PC-3 (cell line): ENCODE measurements at regions of chr5 and their contacts with region 1.

Region 1: GRCh38 chr5:17951392-17952115 is 317.3 kb downstream of the TAF11L14 start:
- DNase-seq: peak; percentile 98
- ATAC-seq: peak; percentile 94
- H3K4me3 ChIP-seq: peak overlapping the region; percentile 61
- H3K27ac ChIP-seq: peak overlapping the region; percentile 99
- H3K4me1 ChIP-seq: peaks cover 22% of the 10 kb centered on the region
- H3K27me3 ChIP-seq: no peaks in the 10 kb centered on the region
- CTCF ChIP-seq: peak; percentile 91

Region 2: GRCh38 chr5:17398439-17398838 is 553.1 kb before region 1 on chr5:
- CTCF ChIA-PET with region 1: no interaction called
- POLR2A ChIA-PET with region 1: interaction called, 10 read pairs
- intact Hi-C with region 1: no loop called
- DNase-seq: peak; percentile 93
- ATAC-seq: peak; percentile 74
- H3K4me3 ChIP-seq: no peak overlapping the region
- H3K27ac ChIP-seq: no peak overlapping the region
- H3K4me1 ChIP-seq: peaks cover 26% of the 10 kb centered on the region
- H3K27me3 ChIP-seq: no peaks in the 10 kb centered on the region
- CTCF ChIP-seq: no peak

Region 3: DNA sequence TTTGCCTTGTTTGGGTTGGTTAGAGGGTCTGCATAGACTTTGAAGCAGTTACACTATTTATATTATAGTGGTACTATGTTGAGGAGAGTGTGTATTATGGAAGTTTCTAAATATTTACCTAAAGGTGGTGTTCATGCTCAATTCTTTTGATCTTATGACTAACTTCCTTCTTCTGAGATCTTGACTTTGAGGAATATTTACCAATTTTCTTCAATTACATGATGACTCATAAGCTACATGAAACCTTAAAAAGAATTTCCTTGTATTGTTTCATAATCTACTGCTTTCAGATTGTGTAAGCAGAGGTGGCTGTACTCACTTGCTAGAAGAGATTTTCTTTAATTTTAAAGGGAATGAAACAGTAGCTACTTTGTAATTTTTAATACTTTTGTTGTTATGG is 41.2 kb before region 1 on chr5:
- CTCF ChIA-PET with region 1: no interaction called
- POLR2A ChIA-PET with region 1: no interaction called
- intact Hi-C with region 1: loop called (anchors 2 kb)
- DNase-seq: peak; percentile 91
- ATAC-seq: peak; percentile 98
- H3K4me3 ChIP-seq: no peak overlapping the region
- H3K27ac ChIP-seq: no peak overlapping the region
- H3K4me1 ChIP-seq: peaks cover 13% of the 10 kb centered on the region
- H3K27me3 ChIP-seq: no peaks in the 10 kb centered on the region
- CTCF ChIP-seq: no peak

Region 4: GRCh38 chr5:18008940-18009339 is 57.4 kb after region 1 on chr5:
- CTCF ChIA-PET with region 1: interaction called, 3 read pairs
- POLR2A ChIA-PET with region 1: no interaction called
- intact Hi-C with region 1: loop called (anchors 5 kb)
- DNase-seq: peak; percentile 50
- ATAC-seq: peak; percentile 95
- H3K4me3 ChIP-seq: no peak overlapping the region
- H3K27ac ChIP-seq: 0 out of 2 replicates have a peak overlapping the region, but pooled peaks have one; percentile 12
- H3K4me1 ChIP-seq: peaks cover 15% of the 10 kb centered on the region
- H3K27me3 ChIP-seq: no peaks in the 10 kb centered on the region
- CTCF ChIP-seq: no peak

Region 5: GRCh38 chr5:18048442-18048841 is 96.9 kb after region 1 on chr5:
- CTCF ChIA-PET with region 1: no interaction called
- POLR2A ChIA-PET with region 1: no interaction called
- intact Hi-C with region 1: loop called (anchors 5 kb)
- DNase-seq: peak; percentile 65
- ATAC-seq: peak; percentile 99
- H3K4me3 ChIP-seq: no peak overlapping the region
- H3K27ac ChIP-seq: no peak overlapping the region
- H3K4me1 ChIP-seq: peaks cover 13% of the 10 kb centered on the region
- H3K27me3 ChIP-seq: no peaks in the 10 kb centered on the region
- CTCF ChIP-seq: no peak

Region 6: GRCh38 chr5:18113721-18114120 is 162.2 kb after region 1 on chr5:
- CTCF ChIA-PET with region 1: no interaction called
- POLR2A ChIA-PET with region 1: no interaction called
- intact Hi-C with region 1: loop called (anchors 1 kb)
- DNase-seq: peak; percentile 70
- ATAC-seq: 0 out of 2 replicates have a peak, but pooled peaks have one; percentile 13
- H3K4me3 ChIP-seq: no peak overlapping the region
- H3K27ac ChIP-seq: no peak overlapping the region
- H3K4me1 ChIP-seq: 0 out of 2 replicates have a peak, but pooled peaks cover 4% of the 10 kb centered on the region
- H3K27me3 ChIP-seq: no peaks in the 10 kb centered on the region
- CTCF ChIP-seq: peak; percentile 75